Activated CD4-positive, alpha-beta T cell treated with anti-CD3 and anti-CD28 coated beads for 36 hours (primary cell): ENCODE measurements at regions of chr9 and their contacts with region 1.

Region 1: GRCh38 chr9:91193658-91194391 is 167.9 kb downstream of the AUH start:
- DNase-seq: peak; percentile 92
- ATAC-seq: peak; percentile 62
- H3K4me3 Mint-ChIP-seq: peak overlapping the region; percentile 65
- H3K27ac Mint-ChIP-seq: peak overlapping the region; percentile 94
- H3K4me1 Mint-ChIP-seq: peaks cover 74% of the 10 kb centered on the region
- H3K27me3 Mint-ChIP-seq: no peaks in the 10 kb centered on the region

Region 2: GRCh38 chr9:90914868-90915483 is 278.8 kb before region 1 on chr9:
- CTCF ChIA-PET with region 1: interaction called, 3 read pairs
- POLR2A ChIA-PET with region 1: interaction called, 3 read pairs
- intact Hi-C with region 1: loop called in 1 of 2 experiments (anchors 10 kb)
- DNase-seq: peak; percentile 89
- ATAC-seq: peak; percentile 98
- H3K4me3 Mint-ChIP-seq: no peak overlapping the region
- H3K27ac Mint-ChIP-seq: no peak overlapping the region
- H3K4me1 Mint-ChIP-seq: no peaks in the 10 kb centered on the region
- H3K27me3 Mint-ChIP-seq: no peaks in the 10 kb centered on the region

Region 3: GRCh38 chr9:91053824-91054223 is 140.0 kb before region 1 on chr9:
- CTCF ChIA-PET with region 1: no interaction called
- POLR2A ChIA-PET with region 1: no interaction called
- intact Hi-C with region 1: loop called in 1 of 2 experiments (anchors 1 kb)
- DNase-seq: peak; percentile 59
- ATAC-seq: peak; percentile 88
- H3K4me3 Mint-ChIP-seq: no peak overlapping the region
- H3K27ac Mint-ChIP-seq: peak overlapping the region; percentile 86
- H3K4me1 Mint-ChIP-seq: peaks cover 77% of the 10 kb centered on the region
- H3K27me3 Mint-ChIP-seq: peaks cover 3% of the 10 kb centered on the region

Region 4: DNA sequence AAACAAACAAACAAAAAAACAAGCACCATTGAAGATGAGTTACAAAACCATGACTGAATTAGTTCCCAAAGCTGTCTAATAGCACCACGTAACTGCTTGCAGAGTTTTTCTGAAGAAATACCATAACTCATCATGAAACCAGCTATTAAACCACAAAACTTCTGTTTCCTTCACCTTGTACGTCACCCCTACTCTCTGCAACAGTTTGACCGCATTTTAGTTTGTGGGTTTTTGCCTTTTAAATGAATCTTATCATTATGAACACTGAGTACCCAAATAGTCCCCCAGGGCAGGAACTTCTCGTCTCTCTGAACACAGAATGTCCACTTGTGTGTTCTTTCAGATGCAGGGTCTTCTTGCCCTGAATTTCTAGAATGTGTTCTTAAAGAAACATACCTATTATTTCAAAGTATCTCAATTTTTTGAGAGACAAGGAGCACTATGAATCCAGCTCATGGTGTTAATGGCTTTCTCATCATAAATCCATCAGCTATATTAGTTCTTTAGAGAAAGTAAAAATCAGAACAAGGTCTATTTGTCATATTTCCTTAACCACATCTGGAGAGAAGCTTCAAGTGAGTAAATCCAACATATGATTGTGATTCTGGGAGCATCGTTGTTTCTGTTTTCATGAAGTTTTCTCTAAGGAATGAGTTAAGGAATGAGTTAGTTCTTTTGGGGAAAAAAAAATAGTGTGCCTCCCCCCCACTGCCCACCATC is 42.7 kb before region 1 on chr9:
- CTCF ChIA-PET with region 1: interaction called, 15 read pairs
- POLR2A ChIA-PET with region 1: interaction called, 55 read pairs
- intact Hi-C with region 1: loop called (anchors 1 kb)
- DNase-seq: peak; percentile 66
- ATAC-seq: peak; percentile 65
- H3K4me3 Mint-ChIP-seq: peak overlapping the region; percentile 13
- H3K27ac Mint-ChIP-seq: peak overlapping the region; percentile 95
- H3K4me1 Mint-ChIP-seq: peaks cover 79% of the 10 kb centered on the region
- H3K27me3 Mint-ChIP-seq: no peaks in the 10 kb centered on the region

Region 5: GRCh38 chr9:91245431-91246313 is 51.8 kb after region 1 on chr9:
- CTCF ChIA-PET with region 1: interaction called, 3 read pairs
- POLR2A ChIA-PET with region 1: interaction called, 3 read pairs
- intact Hi-C with region 1: loop called in 1 of 2 experiments (anchors 1 kb)
- DNase-seq: peak; percentile 34
- ATAC-seq: peak; percentile 98
- H3K4me3 Mint-ChIP-seq: no peak overlapping the region
- H3K27ac Mint-ChIP-seq: peak overlapping the region; percentile 86
- H3K4me1 Mint-ChIP-seq: peaks cover 28% of the 10 kb centered on the region
- H3K27me3 Mint-ChIP-seq: no peaks in the 10 kb centered on the region

Region 6: DNA sequence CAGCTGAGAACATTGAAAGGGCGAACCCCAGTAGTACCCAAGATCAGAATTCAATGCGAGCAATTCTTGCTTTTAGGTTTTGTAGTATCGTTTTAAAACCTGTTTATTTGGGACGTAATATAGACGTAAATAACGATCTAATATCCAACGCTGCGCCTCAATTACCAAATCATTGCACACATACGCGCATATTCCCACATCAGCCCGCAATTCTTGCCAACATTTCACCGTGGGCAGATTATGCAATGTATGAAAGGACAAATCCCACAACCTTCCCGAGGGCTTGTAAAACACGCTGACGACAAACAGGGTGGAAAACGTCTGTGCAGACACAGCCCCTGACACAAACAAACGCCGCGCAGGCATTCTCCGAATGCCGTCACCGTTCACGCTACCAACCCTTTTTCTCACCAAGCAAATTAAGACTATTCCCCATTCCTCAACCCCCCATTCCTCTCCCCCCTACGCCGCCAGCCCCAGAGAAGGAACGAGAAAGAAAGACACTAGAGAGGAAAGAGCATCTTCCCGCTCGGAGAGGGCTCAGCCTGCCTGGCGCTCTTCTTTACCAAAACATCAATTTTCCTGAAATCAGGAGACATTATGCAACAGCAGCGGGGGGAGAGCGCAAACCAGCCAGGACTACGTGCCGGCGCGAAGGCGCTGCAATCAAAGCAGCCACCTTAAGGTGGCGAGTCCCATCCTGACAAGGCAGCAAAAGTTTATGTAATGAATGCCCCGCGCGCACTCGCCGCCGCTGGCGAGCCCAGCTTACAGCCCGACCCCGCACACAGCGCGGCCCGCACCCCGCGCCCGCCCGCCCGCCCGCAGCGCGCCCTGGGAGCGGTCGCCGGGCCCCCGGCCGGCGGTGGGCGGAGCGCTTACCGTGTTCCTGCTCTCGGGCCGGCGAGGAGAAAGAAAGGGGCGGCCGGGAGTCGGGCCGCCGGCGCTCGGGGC is 229.2 kb after region 1 on chr9:
- CTCF ChIA-PET with region 1: interaction called, 3 read pairs
- POLR2A ChIA-PET with region 1: interaction called, 6 read pairs
- intact Hi-C with region 1: loop called (anchors 1 kb)
- DNase-seq: peak; percentile 83
- ATAC-seq: peak; percentile 8
- H3K4me3 Mint-ChIP-seq: peak overlapping the region; percentile 98
- H3K27ac Mint-ChIP-seq: peak overlapping the region; percentile 95
- H3K4me1 Mint-ChIP-seq: peaks cover 55% of the 10 kb centered on the region
- H3K27me3 Mint-ChIP-seq: no peaks in the 10 kb centered on the region

Region 7: DNA sequence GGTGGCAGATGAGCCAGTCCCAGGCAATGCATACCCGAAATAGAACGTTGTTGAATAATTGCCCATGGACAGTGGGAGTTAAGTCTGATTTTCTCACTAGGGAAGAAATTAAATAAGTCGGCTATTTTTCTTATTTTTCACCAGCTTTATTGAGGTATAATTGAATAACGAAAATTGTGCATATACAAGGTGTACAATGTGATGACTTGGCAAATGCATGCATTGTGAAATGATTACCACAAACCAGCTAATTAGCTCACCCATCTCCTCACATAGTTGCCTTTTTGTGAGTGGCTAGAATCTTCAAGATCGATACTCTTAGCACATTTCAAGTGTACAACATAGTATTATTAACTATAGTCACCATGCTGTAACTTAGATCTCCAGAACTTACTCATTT is 506.6 kb after region 1 on chr9:
- CTCF ChIA-PET with region 1: no interaction called
- POLR2A ChIA-PET with region 1: no interaction called
- intact Hi-C with region 1: no loop called
- DNase-seq: no peak
- ATAC-seq: no peak
- H3K4me3 Mint-ChIP-seq: no peak overlapping the region
- H3K27ac Mint-ChIP-seq: no peak overlapping the region
- H3K4me1 Mint-ChIP-seq: peaks cover 2% of the 10 kb centered on the region
- H3K27me3 Mint-ChIP-seq: peaks cover 8% of the 10 kb centered on the region